Activated CD8-positive, alpha-beta T cell treated with anti-CD3 and anti-CD28 coated beads for 36 hours (primary cell): ENCODE measurements at regions of chrX and their contacts with region 1.

Region 1: DNA sequence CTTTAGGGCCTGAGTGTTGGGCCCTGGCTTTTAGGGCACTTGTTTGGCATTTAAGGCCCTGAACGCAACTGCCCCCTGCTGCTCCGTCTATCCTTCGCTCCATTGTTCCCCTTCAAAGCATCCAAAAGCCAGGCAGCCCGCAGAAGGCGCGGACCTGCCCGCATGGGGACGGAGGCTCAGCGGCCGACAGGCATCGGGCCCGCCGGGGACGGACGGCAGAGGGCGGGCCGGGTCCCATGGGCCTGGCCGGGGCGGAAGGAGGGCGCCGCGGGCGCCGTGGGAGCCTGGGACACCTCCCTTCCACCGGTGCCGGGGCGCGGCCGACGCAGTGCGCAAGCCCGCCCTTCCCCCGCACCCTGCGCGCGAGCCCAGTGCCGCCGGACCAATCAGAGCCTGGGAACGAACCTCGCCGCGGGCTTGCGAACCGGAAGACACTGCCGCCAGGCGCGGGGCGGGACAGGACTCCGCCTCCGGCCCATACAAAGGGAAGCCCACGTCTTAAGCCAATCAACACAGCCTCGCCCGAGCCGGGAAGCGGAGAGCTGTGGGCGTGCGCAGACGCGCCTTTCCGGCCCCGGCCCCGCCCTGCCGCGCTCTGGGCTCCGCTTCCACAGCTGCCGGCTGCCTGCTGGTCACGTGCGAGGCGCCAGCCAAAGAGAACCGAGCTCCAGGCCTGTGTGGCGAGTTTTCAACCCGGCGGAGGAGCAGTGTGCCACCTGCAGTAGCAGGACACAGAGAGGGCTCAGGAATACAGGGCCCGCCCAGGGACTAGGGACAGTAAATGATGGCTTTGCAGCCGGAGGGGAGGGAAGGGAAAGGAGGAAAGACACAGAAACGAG is 2.1 kb upstream of the ARHGAP4 start:
- DNase-seq: peak; percentile 95
- ATAC-seq: peak; percentile 72
- H3K4me3 Mint-ChIP-seq: peak overlapping the region; percentile 88
- H3K27ac Mint-ChIP-seq: peak overlapping the region; percentile 99
- H3K4me1 Mint-ChIP-seq: peaks cover 22% of the 10 kb centered on the region
- H3K27me3 Mint-ChIP-seq: no peaks in the 10 kb centered on the region
- CTCF ChIP-seq: no peak

Region 2: DNA sequence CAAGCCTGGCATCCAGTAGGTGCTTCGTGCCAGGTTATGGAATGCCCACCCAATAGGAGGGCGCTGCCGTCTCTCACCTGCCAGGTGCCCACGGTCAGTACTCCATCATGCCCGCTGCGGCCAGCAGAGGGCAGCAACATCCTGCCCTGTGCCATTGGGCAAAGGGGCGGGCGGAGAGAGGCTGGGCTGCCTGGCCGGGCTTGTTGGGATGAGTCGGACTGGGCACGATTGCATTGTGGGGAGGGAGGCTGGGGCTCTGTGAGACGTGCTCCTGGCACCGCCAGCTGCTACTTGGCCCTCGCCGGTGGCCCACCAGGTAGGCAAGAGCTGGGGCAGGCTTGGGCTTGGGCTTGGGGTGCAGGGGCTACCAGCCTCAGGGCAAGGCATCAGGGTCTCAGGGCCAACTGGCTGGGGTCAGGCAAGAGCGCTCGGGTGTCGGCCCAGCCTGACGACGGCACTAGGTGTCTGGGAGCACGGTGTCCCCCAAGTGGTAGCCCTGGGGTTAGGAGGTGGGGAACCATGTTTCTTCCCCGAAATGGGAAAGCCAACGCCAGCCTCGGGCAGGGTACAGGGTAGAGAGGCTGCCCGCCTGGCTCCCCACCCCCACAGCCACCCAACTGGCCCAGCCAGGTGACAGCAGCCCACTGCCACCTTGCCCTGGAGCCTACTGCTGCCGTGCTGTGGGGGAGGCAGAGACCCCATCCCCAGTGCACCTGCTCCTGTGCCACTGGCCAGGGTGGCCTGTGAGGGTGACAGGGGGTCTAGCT is 164.0 kb before region 1 on chrX and contains the start of gene PLXNB3:
- CTCF ChIA-PET with region 1: interaction called, 4 read pairs
- POLR2A ChIA-PET with region 1: interaction called, 4 read pairs
- intact Hi-C with region 1: loop called (anchors 10 kb)
- DNase-seq: peak; percentile 82
- ATAC-seq: peak; percentile 75
- H3K4me3 Mint-ChIP-seq: peak within 1 kb of the TSS; percentile 33
- H3K27ac Mint-ChIP-seq: no peak within 1 kb of the TSS
- H3K4me1 Mint-ChIP-seq: peaks cover 16% of the 10 kb centered on the region
- H3K27me3 Mint-ChIP-seq: no peaks in the 10 kb centered on the region
- CTCF ChIP-seq: peak; percentile 75
- total RNA-seq, gene PLXNB3: 7.7 to 8.2 TPM

Region 3: GRCh38 chrX:153786669-153787068 is 141.5 kb before region 1 on chrX:
- CTCF ChIA-PET with region 1: no interaction called
- POLR2A ChIA-PET with region 1: no interaction called
- intact Hi-C with region 1: no loop called
- DNase-seq: no peak
- ATAC-seq: no peak
- H3K4me3 Mint-ChIP-seq: no peak overlapping the region
- H3K27ac Mint-ChIP-seq: no peak overlapping the region
- H3K4me1 Mint-ChIP-seq: peaks cover 3% of the 10 kb centered on the region
- H3K27me3 Mint-ChIP-seq: no peaks in the 10 kb centered on the region
- CTCF ChIP-seq: no peak

Region 4: GRCh38 chrX:153909024-153909970 is 18.8 kb before region 1 on chrX:
- CTCF ChIA-PET with region 1: interaction called, 4 read pairs
- POLR2A ChIA-PET with region 1: interaction called, 25 read pairs
- intact Hi-C with region 1: no loop called
- DNase-seq: peak; percentile 44
- ATAC-seq: peak; percentile 46
- H3K4me3 Mint-ChIP-seq: no peak overlapping the region
- H3K27ac Mint-ChIP-seq: no peak overlapping the region
- H3K4me1 Mint-ChIP-seq: peaks cover 17% of the 10 kb centered on the region
- H3K27me3 Mint-ChIP-seq: no peaks in the 10 kb centered on the region
- CTCF ChIP-seq: no peak

Region 5: GRCh38 chrX:153971450-153972367 is 43.6 kb after region 1 on chrX and contains the start of gene HCFC1:
- CTCF ChIA-PET with region 1: interaction called, 9 read pairs
- POLR2A ChIA-PET with region 1: interaction called, 105 read pairs
- intact Hi-C with region 1: no loop called
- DNase-seq: peak; percentile 93
- ATAC-seq: peak; percentile 32
- H3K4me3 Mint-ChIP-seq: peak within 1 kb of the TSS; percentile 93
- H3K27ac Mint-ChIP-seq: peak within 1 kb of the TSS; percentile 100
- H3K4me1 Mint-ChIP-seq: peaks cover 23% of the 10 kb centered on the region
- H3K27me3 Mint-ChIP-seq: no peaks in the 10 kb centered on the region
- CTCF ChIP-seq: no peak
- total RNA-seq, gene HCFC1: 115 to 116 TPM

Region 6: GRCh38 chrX:154063234-154063633 is 135.1 kb after region 1 on chrX:
- CTCF ChIA-PET with region 1: no interaction called
- POLR2A ChIA-PET with region 1: no interaction called
- intact Hi-C with region 1: no loop called
- DNase-seq: no peak
- ATAC-seq: peak; percentile 59
- H3K4me3 Mint-ChIP-seq: no peak overlapping the region
- H3K27ac Mint-ChIP-seq: peak overlapping the region; percentile 75
- H3K4me1 Mint-ChIP-seq: peaks cover 74% of the 10 kb centered on the region
- H3K27me3 Mint-ChIP-seq: no peaks in the 10 kb centered on the region
- CTCF ChIP-seq: no peak